Activated naive CD4-positive, alpha-beta T cell treated with anti-CD3 and anti-CD28 coated beads for 36 hours (primary cell): ENCODE measurements at regions of chr3 and their contacts with region 1.

Region 1: GRCh38 chr3:66302288-66302687 is 81.5 kb downstream of the SLC25A26 start:
- DNase-seq: peak; percentile 56
- H3K4me3 Mint-ChIP-seq: no peak overlapping the region
- H3K27ac Mint-ChIP-seq: peak overlapping the region; percentile 91
- H3K4me1 Mint-ChIP-seq: peaks cover 72% of the 10 kb centered on the region
- H3K27me3 Mint-ChIP-seq: no peaks in the 10 kb centered on the region

Region 2: GRCh38 chr3:66220602-66221377 is 81.5 kb before region 1 on chr3 and contains the start of gene SLC25A26:
- CTCF ChIA-PET with region 1: no interaction called
- intact Hi-C with region 1: loop called (anchors 2 kb)
- DNase-seq: peak; percentile 99
- H3K4me3 Mint-ChIP-seq: peak within 1 kb of the TSS; percentile 91
- H3K27ac Mint-ChIP-seq: peak within 1 kb of the TSS; percentile 95
- H3K4me1 Mint-ChIP-seq: peaks cover 51% of the 10 kb centered on the region
- H3K27me3 Mint-ChIP-seq: no peaks in the 10 kb centered on the region
- total RNA-seq, gene SLC25A26: 25.3 to 26.3 TPM

Region 3: GRCh38 chr3:66276705-66277274 is 25.5 kb before region 1 on chr3:
- CTCF ChIA-PET with region 1: no interaction called
- intact Hi-C with region 1: loop called (anchors 2 kb)
- DNase-seq: peak; percentile 84
- H3K4me3 Mint-ChIP-seq: no peak overlapping the region
- H3K27ac Mint-ChIP-seq: no peak overlapping the region
- H3K4me1 Mint-ChIP-seq: peaks cover 24% of the 10 kb centered on the region
- H3K27me3 Mint-ChIP-seq: no peaks in the 10 kb centered on the region

Region 4: GRCh38 chr3:66394019-66394752 is 91.9 kb after region 1 on chr3:
- CTCF ChIA-PET with region 1: no interaction called
- intact Hi-C with region 1: loop called (anchors 1 kb)
- DNase-seq: peak; percentile 75
- H3K4me3 Mint-ChIP-seq: peak overlapping the region; percentile 73
- H3K27ac Mint-ChIP-seq: peak overlapping the region; percentile 82
- H3K4me1 Mint-ChIP-seq: peaks cover 48% of the 10 kb centered on the region
- H3K27me3 Mint-ChIP-seq: no peaks in the 10 kb centered on the region

Region 5: DNA sequence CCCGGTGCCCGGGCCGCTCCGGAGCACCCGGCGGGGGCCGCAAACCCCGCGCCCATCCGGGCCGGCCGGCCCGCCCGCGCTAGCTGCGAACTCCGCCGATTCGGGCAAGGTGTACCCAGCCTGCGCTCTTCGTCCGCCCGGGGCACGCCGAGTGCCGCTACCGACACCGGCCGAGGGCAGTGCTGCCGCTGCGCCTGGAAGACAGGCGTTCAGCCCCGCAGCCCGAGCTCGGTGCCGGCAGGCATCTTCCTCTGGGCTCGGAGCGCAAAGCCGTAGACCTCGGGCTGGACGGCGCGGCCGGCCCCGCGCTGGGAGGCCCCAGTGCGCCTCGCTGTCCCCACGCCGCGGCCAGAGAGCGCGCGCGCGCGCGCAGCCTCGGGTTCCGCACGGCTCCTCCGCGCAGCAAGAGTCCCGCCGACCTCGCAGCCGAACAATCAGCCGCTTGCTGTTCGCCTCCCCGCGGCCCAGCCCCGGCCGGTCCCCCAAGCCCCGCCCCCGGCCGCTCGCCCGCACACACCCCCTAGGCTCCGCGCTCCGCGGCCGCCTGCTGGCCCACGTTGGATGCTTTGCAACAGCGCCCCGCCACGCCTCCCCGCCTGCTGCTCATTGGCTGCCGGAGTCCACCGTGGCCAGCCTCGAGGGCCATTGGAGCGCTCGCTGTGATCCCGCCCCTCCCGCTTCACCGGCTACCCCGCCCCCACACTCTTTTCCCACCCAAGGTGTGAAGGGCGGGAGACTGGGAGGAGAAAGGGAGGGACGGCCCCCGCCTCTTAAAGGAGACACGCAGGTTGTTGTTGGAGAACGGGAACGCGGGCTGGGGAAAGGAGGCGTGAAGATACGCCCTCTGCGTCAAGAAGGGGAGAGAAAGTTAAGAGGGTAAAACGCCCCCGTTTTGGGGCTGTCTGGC is 198.5 kb after region 1 on chr3 and contains the start of gene LRIG1:
- CTCF ChIA-PET with region 1: no interaction called
- intact Hi-C with region 1: loop called (anchors 1 kb)
- DNase-seq: peak; percentile 98
- H3K4me3 Mint-ChIP-seq: peak within 1 kb of the TSS; percentile 90
- H3K27ac Mint-ChIP-seq: peak within 1 kb of the TSS; percentile 84
- H3K4me1 Mint-ChIP-seq: peaks cover 50% of the 10 kb centered on the region
- H3K27me3 Mint-ChIP-seq: peaks cover 3% of the 10 kb centered on the region
- total RNA-seq, gene LRIG1: 18.3 to 19.0 TPM

Region 6: GRCh38 chr3:66729639-66730393 is 427.5 kb after region 1 on chr3:
- CTCF ChIA-PET with region 1: no interaction called
- intact Hi-C with region 1: no loop called
- DNase-seq: no peak
- H3K4me3 Mint-ChIP-seq: no peak overlapping the region
- H3K27ac Mint-ChIP-seq: no peak overlapping the region
- H3K4me1 Mint-ChIP-seq: no peaks in the 10 kb centered on the region
- H3K27me3 Mint-ChIP-seq: peaks cover 7% of the 10 kb centered on the region